ENCODE measurements at regions of chr1 and their contacts with region 1.

Region 1: GRCh38 chr1:3618881-3619671 is 5.7 kb upstream of the TPRG1L start:
- DNase-seq: peak; percentile 32 to 46
- ATAC-seq: peak; percentile 60 to 83
- H3K4me3 ChIP-seq: no peak overlapping the region
- H3K27ac ChIP-seq: no peak overlapping the region
- H3K4me1 ChIP-seq: peaks cover 14 to 16% of the 10 kb centered on the region in 2 donors
- H3K27me3 ChIP-seq: no peaks in the 10 kb centered on the region
- CTCF ChIP-seq: peak; percentile 66 to 91 (median 84)
- POLR2A ChIP-seq: no peak

Region 2: GRCh38 chr1:3491291-3492246 is 127.5 kb before region 1 on chr1:
- in situ Hi-C with region 1: loop called (anchors 5 to 10 kb)
- intact Hi-C with region 1: loop called (anchors 1 kb)
- DNase-seq: peak; percentile 56 to 57
- ATAC-seq: peak; percentile 61 to 86
- H3K4me3 ChIP-seq: no peak overlapping the region
- H3K27ac ChIP-seq: no peak overlapping the region
- H3K4me1 ChIP-seq: peaks cover 0 to 2% of the 10 kb centered on the region in 2 donors
- H3K27me3 ChIP-seq: no peaks in the 10 kb centered on the region
- CTCF ChIP-seq: peak; percentile 85 to 100 (median 99)
- POLR2A ChIP-seq: no peak

Region 3: GRCh38 chr1:3564921-3565827 is 53.9 kb before region 1 on chr1:
- in situ Hi-C with region 1: no loop called
- intact Hi-C with region 1: loop called (anchors 1 kb)
- DNase-seq: no peak
- ATAC-seq: peak in 1 of 2 donors; percentile 51
- H3K4me3 ChIP-seq: no peak overlapping the region
- H3K27ac ChIP-seq: no peak overlapping the region
- H3K4me1 ChIP-seq: no peaks in the 10 kb centered on the region
- H3K27me3 ChIP-seq: no peaks in the 10 kb centered on the region
- CTCF ChIP-seq: peak; percentile 70 to 87 (median 80)
- POLR2A ChIP-seq: no peak

Region 4: DNA sequence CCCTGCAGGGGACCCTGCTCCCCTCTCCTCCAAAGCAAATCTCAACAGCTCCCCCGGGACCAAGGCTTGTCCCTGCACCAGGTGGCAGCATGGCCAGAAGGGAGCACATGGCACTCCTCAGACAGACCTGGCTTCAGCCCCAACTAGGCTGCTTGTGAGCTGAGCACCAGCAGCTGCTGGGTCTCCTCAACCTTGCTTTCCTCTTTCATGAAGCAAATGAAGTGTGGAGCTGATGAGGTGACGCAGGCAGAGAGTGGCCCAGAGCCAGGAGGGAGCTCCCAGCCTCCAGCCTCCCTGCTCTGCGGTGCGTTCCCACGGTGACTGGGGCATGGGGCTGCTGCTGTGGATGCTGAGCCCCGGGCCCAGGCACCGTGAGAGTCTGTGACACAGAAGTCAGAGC is 41.8 kb before region 1 on chr1:
- in situ Hi-C with region 1: no loop called
- intact Hi-C with region 1: no loop called
- DNase-seq: no peak
- ATAC-seq: no peak
- H3K4me3 ChIP-seq: no peak overlapping the region
- H3K27ac ChIP-seq: no peak overlapping the region
- H3K4me1 ChIP-seq: no peaks in the 10 kb centered on the region
- H3K27me3 ChIP-seq: peaks cover 5 to 26% (median 6%) of the 10 kb centered on the region in 3 donors
- CTCF ChIP-seq: no peak
- POLR2A ChIP-seq: no peak

Region 5: DNA sequence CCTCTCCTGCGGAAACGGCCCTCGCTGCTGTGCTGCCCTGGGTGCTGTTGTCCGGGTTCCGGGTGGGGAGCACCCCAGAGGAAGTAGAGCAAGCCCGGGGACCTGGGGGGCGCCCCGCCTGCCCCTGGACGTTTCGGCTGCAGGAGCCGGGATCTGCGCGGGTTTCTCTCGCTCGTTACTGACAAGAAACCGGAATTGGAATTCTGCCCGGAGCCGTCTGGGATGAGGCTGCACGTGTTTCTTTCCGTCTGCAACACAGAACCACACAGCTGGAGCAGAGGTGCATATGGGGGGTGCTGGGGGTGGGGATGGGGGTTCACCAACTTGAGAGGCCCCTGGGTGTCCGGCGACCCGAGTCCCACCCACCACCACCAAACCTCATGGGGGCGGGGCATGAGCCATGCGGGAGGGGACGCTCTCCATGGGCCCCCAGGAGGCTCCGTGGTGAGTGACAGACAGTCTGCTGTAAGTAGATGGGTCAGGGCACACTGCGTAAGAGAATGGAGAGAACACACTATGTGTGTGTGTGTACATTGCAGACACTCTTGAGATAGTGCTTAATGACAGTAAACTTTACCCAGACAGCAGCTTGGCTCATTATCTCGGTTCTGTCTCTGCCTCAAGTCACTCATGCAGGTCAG is 542.4 kb after region 1 on chr1:
- in situ Hi-C with region 1: no loop called
- intact Hi-C with region 1: no loop called
- DNase-seq: no peak
- ATAC-seq: no peak
- H3K4me3 ChIP-seq: no peak overlapping the region
- H3K27ac ChIP-seq: no peak overlapping the region
- H3K4me1 ChIP-seq: no peaks in the 10 kb centered on the region
- H3K27me3 ChIP-seq: no peaks in the 10 kb centered on the region
- CTCF ChIP-seq: no peak
- POLR2A ChIP-seq: no peak

Measured in gastrocnemius medialis (tissue), 4 donors.